Right lobe of liver (tissue), 6 donors: ENCODE measurements at regions of chr4 and their contacts with region 1.

Region 1: DNA sequence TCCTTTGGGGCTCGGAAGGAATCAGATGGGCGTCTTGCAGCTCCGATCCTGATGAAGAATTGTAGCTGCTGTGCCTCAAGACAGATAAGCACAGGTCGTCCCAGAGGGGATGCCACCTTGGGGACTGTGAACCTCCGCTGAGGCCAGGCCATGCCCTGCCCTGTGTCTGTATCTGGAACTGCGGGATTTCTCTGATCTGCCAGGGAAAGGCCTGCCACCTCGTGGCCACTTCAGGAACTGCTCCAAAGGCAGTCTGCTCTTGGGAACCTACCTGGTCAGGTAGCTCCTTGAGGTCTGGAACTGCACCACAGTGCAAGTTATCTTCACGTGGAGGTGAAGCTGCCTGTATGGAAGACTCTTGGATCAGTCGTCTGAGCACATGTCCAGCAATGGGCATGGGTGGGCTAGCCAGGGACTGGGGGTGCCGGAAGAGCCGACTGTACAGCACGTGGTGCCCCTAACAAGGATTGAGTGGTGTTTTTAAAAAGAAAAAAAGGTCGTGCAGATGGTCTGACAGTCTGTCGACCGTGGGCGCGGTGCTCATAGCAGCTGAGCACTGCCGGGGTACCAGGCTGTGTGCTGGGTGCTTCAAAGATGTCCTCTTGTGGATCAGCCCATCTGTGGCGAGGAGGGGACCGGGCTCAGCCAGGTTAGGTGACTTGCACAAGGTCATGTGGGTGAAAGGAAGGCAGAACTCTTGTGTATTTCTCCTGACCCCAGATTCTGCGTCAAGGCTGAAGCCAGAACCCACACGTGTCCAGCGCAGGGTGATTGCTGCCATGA is 3.1 kb upstream of the GRPEL1 start:
- DNase-seq: peak; percentile 81 to 85 (median 85)
- ATAC-seq: peak; percentile 47 to 55 (median 52)
- H3K4me3 ChIP-seq: no peak overlapping the region
- H3K27ac ChIP-seq: no peak overlapping the region
- H3K4me1 ChIP-seq: peaks cover 0 to 20% (median 7%) of the 10 kb centered on the region in 4 donors
- H3K27me3 ChIP-seq: no peaks in the 10 kb centered on the region
- CTCF ChIP-seq: peak; percentile 98 to 99 (median 98)
- POLR2A ChIP-seq: no peak

Region 2: GRCh38 chr4:6909073-6909965 is 161.6 kb before region 1 on chr4 and contains the start of gene TBC1D14:
- intact Hi-C with region 1: loop called in 1 of 2 experiments (anchors 10 kb)
- DNase-seq: peak; percentile 89 to 92 (median 90)
- ATAC-seq: peak; percentile 78 to 88 (median 80)
- H3K4me3 ChIP-seq: peak within 1 kb of the TSS; percentile 70 to 92 (median 74)
- H3K27ac ChIP-seq: peak within 1 kb of the TSS; percentile 95 to 99 (median 97)
- H3K4me1 ChIP-seq: peaks cover 0 to 59% (median 21%) of the 10 kb centered on the region in 4 donors
- H3K27me3 ChIP-seq: no peaks in the 10 kb centered on the region
- CTCF ChIP-seq: peak in 2 of 4 donors; percentile 15 to 27
- POLR2A ChIP-seq: peak; percentile 87
- total RNA-seq, gene TBC1D14: 14.1 to 34.8 (median 30.6) TPM

Region 3: DNA sequence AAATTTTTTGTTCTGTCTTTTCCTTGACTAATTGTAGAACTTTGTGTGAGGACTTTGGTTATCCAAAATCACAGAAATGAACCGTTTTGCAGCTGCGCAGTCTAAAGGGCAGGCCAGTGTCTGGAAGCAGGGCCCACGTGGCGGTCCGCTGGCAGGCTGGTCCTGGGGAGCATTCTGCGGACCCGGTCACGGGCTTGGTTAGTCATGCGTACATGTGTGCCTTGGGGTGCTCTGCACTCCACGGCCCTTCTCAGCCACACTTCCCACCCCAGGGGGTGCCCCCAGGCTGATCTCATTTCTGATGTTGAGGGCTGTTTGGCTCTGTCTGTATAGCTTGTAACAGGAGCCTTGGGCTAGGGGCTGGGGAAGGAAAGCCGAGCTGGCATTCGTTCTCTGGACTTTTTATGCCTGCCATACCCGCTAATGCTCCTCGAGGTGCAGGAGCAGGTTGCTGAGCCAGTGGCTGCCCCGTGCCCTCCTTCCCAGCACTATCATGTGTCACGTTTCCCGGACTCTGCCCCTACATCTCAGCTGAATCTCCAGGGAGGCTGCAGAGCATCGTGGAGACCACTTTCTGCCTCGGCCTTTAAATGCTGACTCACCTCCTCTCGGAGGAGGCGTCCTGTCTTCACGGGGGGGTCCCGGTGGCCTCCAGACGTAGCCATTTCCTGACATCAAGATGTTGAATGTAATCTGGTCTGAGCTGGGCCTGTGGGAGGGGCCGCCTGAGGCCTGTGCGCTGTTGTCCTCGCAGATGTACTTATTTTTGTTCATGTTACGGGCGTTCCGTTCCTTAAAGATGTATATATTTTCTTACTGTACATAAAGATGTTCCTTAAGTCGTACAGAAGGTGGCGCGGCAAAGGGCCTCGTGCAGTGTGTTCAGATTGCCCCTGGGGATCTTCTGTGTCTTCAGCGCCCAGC is 39.1 kb before region 1 on chr4:
- intact Hi-C with region 1: no loop called
- DNase-seq: no peak
- ATAC-seq: no peak
- H3K4me3 ChIP-seq: no peak overlapping the region
- H3K27ac ChIP-seq: no peak overlapping the region
- H3K4me1 ChIP-seq: peaks cover 0 to 26% (median 12%) of the 10 kb centered on the region in 4 donors
- H3K27me3 ChIP-seq: no peaks in the 10 kb centered on the region
- CTCF ChIP-seq: no peak
- POLR2A ChIP-seq: no peak

Region 4: DNA sequence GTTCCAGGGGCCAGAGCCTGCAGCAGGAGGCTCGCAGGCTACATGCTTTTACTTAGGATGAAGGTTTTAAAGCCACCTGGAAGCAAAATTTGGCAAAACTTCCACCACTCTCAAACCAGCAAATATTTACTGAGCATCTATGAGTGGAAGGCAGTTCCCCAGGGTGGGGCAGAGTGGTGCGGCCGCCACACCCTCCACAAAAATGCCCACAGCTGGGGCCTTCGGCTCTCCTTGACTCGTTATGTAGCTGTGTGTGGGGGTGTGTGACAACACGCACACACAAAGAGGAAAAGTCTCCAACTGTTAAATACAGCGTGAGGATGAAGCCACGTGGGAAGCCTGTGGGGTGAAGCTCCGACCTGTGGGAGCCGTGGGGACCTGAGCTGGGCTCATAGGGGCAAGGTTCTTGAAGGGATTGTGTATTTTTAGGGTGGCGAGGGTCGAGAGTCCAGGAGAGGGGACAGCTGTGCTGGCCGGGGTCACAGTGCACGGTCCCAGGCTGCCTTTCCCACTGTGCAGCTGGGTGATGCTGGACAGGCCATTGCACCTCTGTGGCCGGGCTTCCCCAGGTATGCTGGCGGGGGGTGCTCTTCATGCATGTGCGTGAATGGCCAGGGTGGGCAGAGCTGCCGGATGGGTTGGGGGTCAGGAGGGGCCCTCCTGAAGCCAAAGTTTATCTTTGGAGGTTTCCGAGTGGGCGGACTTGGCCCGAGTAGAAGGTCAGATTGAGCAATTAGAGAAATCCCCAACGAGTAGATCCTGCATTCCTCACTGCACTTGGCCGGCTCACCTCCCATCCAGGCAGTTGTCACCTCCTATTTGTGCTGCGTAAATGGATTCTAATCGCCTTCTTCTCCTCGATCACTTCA is 146.8 kb after region 1 on chr4:
- intact Hi-C with region 1: no loop called
- DNase-seq: peak in 2 of 3 donors; percentile 62 to 83
- ATAC-seq: peak; percentile 83 to 88 (median 84)
- H3K4me3 ChIP-seq: peak overlapping the region in 1 of 3 donors; percentile 14
- H3K27ac ChIP-seq: peak overlapping the region in 2 of 3 donors; percentile 10 to 66
- H3K4me1 ChIP-seq: peaks cover 0 to 26% (median 9%) of the 10 kb centered on the region in 4 donors
- H3K27me3 ChIP-seq: no peaks in the 10 kb centered on the region
- CTCF ChIP-seq: no peak
- POLR2A ChIP-seq: no peak